Dorsolateral prefrontal cortex (tissue), 120 donors: ENCODE measurements at regions of chr9 and their contacts with region 1.

Region 1: GRCh38 chr9:136170006-136170901 is 34.7 kb downstream of the LHX3 start:
- DNase-seq: peak in 5 of 10 donors; percentile 16 to 62 (median 30)
- H3K4me3 ChIP-seq: no peak overlapping the region
- H3K27ac ChIP-seq: no peak overlapping the region
- H3K27me3 ChIP-seq: peaks cover 0 to 19% (median 0%) of the 10 kb centered on the region in 45 donors
- CTCF ChIP-seq: peak; percentile 11 to 72 (median 60)

Region 2: DNA sequence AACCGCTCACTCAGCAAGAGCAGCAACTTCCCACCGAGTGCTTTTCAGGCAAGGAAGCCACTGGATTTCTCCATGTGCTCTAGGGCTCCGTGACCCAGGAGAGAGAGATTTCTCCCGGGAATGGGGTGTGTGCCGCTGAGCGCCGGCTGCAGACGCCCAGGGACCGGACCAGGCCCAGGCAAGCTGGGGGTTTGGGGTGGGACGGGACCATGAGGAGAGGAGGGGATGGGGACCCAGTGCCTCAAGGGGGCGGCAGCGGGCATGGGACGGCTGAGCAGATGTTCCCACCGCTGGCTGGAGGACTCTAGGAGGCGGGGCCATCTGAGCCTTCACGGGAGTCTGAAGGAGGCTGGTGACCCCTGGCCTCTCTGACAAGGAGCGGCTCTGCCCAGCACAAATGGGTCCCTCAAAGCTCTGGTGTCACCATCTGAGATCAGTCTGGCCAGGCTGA is 498.6 kb before region 1 on chr9:
- intact Hi-C with region 1: no loop called
- DNase-seq: peak in 2 of 10 donors; percentile 10 to 31
- H3K4me3 ChIP-seq: no peak overlapping the region
- H3K27ac ChIP-seq: no peak overlapping the region
- H3K27me3 ChIP-seq: peaks cover 0 to 6% (median 0%) of the 10 kb centered on the region in 45 donors
- CTCF ChIP-seq: no peak

Region 3: DNA sequence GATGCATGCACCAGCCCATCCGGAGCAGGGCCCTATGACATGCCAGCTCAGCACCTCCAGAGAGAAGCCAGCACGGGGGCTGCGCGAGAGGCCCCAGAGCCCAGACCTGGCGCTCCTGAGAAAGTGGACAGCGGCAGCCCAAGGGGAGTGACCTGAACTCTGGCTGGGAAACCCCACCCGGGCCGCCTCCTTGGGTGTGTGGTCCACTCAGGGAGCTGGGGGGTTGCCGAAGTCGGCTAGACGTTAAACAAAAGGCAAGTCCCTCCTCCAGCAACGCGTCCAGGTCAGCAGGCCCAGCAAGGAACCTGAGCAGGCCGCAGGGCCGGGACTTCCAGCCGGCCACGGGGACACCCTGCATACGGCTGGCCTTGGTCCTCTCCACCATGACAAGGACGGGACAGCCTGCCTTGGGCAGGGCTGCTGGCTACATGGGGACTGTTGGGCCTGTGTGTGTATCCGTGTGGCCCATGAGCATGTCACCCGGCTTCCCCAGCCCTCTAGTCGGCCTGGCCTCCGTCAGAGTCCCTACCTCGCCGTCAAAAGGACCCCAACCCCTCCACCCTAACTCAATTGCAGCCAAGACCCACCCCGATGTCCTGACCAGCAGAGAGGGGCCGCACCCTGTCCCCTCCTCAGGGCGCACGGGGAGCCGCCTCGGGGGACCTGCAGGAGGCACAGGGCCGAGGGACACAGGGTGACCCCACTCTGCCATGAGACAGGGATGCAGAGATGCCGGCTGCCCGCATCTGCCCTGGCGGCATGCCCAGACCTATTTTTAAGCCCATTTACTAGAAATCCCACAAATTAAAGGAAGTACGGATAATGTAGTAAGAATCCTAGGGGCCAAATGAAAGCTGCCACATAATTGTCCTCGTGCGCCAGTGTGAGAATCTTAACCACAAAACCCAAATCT is 110.7 kb before region 1 on chr9:
- intact Hi-C with region 1: no loop called
- DNase-seq: peak in 2 of 10 donors; percentile 8 to 25
- H3K4me3 ChIP-seq: no peak overlapping the region
- H3K27ac ChIP-seq: peak overlapping the region in 1 of 59 donors; percentile 9
- H3K27me3 ChIP-seq: no peaks in the 10 kb centered on the region
- CTCF ChIP-seq: no peak

Region 4: GRCh38 chr9:136283291-136284235 is 113.3 kb after region 1 on chr9:
- intact Hi-C with region 1: loop called in 1 of 2 experiments (anchors 5 kb)
- DNase-seq: peak; percentile 70 to 92 (median 80)
- H3K4me3 ChIP-seq: peak overlapping the region in 55 of 59 donors; percentile 0 to 62 (median 38)
- H3K27ac ChIP-seq: peak overlapping the region in 22 of 59 donors; percentile 1 to 86 (median 38)
- H3K27me3 ChIP-seq: peaks cover 0 to 4% (median 0%) of the 10 kb centered on the region in 45 donors
- CTCF ChIP-seq: peak; percentile 52 to 91 (median 83)

Region 5: DNA sequence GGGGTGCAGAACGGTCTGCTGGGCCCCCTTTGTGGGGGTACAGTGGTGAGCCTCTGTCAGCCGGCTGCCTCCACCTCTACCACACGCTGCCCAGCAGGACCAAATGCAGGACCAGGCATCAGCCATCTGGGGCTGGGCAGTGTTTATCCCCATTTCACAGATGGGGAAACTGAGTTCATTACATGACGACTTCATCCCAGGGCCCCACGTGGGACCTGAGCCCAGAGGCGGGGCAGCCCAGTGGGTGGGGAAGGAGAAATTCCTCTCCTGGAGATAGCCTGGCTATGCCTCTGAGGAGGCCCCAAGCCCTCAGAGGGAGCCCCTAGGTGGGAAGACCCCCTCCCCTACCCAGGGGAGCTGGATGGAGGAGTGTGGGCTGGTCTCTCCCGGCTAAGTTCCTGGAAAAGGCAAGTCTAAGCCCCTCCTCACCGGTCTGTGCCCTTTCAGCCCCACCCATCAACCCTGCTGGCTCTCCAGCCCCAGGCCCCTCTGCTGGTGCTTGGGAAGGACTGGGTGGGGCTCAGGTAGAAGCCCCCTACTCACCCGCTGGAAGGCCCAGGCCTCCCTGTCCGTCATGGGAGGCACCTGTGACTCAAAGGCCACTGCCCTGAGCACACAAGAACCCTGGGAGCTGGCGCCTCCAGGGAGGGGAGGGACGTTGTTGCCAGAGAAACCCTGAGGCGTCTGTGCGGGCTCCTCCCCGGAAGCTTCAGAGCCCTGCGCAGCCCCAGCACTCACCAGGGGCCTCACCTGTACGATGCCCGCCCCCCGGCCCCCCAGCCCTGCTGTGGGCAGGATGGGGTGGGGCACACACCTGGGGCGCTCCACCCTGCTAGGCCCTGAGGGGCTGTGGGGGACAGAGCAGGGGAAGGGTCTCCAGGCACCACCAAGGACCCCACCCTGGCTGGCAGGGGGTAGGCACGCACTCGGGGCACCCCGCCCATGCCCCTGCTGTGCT is 141.1 kb after region 1 on chr9:
- intact Hi-C with region 1: no loop called
- DNase-seq: no peak
- H3K4me3 ChIP-seq: no peak overlapping the region
- H3K27ac ChIP-seq: no peak overlapping the region
- H3K27me3 ChIP-seq: peaks cover 0 to 17% (median 0%) of the 10 kb centered on the region in 45 donors
- CTCF ChIP-seq: no peak